ENCODE measurements at regions of chr20 and their contacts with region 1.

Region 1: DNA sequence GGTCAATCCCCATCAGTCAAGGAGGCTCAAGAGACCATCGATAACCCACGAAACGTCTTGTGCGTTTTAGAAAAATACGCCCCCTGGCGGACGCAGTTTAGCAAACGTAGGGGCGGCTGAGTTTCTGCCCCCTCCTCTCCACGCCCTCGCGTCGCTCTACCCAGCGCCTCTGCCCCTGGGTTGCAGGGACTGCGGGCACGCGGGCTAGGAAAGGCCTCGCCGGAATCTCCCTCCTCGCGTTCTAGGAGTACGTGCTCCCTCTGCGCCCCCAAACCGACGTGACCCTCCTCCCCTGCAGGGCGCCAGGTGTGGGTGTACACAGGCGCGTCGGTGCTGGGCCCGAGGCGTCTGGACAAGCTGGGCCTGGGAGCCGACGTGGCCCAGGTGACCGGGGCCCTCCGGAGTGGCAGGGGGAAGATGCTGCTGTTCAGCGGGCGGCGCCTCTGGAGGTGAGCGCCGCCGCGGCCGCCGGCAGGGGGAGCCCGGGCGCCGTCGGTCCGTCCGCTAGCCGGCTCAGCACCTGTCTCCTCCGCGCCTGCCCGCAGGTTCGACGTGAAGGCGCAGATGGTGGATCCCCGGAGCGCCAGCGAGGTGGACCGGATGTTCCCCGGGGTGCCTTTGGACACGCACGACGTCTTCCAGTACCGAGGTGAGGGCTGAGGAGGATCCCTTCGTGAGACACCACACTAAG is 5.3 kb downstream of the MMP9 start:
- DNase-seq: peak; percentile 70
- H3K4me3 ChIP-seq: no peak overlapping the region
- H3K27ac ChIP-seq: no peak overlapping the region
- H3K4me1 ChIP-seq: no peaks in the 10 kb centered on the region
- H3K27me3 ChIP-seq: peaks cover 48% of the 10 kb centered on the region

Region 2: DNA sequence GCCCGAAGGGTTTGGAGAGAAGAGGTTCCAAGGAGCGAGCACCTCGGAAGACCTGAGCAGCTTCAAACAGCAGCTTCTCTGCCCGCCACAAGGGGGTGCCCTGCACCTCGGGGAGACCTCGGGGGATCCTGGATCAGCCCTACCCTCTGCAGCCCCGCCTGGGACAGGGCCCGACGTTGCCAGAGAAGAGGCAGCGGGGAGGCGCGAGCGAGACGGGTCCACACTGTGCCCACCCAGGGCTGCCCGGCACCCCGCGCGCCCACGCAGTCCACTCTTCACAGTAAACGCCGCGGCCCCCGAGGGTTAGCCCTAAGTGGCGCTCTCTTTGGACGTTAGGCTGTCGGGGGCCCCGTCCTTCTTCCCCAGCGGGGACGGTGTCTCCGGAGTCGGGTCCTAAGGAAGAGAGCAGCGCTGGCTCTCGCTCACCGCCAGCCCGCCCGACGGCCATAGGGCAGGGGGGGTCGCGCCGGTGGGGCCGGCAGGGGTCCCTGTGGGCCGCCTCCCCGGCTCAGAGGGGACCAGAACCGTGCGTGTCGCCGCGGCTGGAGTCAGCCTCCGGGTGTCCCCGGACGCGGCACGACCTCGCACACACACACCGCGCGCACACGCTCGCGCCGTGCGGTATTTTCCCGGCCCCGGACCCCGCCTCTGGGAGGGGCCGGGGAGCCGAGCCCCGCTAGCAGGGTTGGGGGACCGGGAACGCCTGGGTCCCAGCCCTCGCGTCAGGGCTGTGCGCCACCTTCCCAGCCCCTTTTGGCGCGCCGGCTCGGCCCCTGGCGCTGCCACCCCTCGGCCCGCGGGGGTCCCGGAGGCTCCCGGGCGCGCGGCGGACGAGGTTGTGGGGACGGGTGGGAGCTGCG is 293.4 kb after region 1 on chr20:
- in situ Hi-C with region 1: loop called (anchors 25 kb)
- DNase-seq: peak; percentile 68
- H3K4me3 ChIP-seq: peak overlapping the region; percentile 51; the same call in 1 of the 2 replicates
- H3K27ac ChIP-seq: no peak overlapping the region
- H3K4me1 ChIP-seq: no peaks in the 10 kb centered on the region
- H3K27me3 ChIP-seq: peaks cover 82% of the 10 kb centered on the region

Region 3: DNA sequence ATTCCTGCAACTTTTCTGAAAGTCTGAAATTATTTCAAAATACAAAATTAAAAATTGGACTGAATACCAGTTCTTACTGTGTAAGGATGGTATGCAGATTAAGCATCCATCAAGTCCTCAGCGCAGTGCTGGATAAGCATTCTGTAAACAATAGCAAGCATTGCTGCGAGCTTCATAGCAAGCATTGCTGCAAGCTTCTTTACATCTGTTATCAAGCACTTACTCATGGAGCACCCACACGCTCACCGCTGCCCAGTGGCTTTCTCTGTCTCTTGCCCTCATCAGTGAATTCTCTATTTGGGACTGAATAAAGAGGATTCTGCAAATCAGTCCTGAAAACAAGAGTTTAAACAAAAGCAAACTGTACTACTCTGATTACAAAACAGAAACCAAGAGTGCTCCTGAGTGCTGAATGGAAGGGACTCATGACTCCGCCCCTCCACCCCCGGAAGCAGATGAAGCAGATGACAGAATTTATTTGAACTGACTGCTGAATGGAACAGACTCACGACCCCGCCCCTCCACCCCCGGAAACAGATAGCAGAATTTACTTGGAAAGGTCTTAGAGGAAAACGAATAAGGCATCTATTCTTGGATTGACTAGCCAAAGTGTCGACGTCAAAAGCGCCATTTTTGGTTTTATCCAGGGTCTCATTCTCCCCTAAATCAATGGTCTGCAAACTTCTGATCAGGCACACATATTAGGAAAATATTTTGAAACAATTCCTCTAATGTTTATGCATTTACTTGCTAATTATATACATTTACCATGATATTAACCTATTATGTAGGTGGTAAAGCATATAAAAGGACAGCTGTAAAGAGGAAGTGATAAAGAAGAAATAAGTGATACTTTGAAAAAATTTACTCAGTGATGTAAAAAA is 858.6 kb after region 1 on chr20:
- in situ Hi-C with region 1: no loop called
- DNase-seq: peak; percentile 21
- H3K4me3 ChIP-seq: peak overlapping the region; percentile 17
- H3K27ac ChIP-seq: no peak overlapping the region
- H3K4me1 ChIP-seq: no peaks in the 10 kb centered on the region
- H3K27me3 ChIP-seq: 0 out of 2 replicates have a peak, but pooled peaks cover 16% of the 10 kb centered on the region

Measured in GM23248 (cell line).